GM12878 (cell line): ENCODE measurements at regions of chr11 and their contacts with region 1.

Region 1: DNA sequence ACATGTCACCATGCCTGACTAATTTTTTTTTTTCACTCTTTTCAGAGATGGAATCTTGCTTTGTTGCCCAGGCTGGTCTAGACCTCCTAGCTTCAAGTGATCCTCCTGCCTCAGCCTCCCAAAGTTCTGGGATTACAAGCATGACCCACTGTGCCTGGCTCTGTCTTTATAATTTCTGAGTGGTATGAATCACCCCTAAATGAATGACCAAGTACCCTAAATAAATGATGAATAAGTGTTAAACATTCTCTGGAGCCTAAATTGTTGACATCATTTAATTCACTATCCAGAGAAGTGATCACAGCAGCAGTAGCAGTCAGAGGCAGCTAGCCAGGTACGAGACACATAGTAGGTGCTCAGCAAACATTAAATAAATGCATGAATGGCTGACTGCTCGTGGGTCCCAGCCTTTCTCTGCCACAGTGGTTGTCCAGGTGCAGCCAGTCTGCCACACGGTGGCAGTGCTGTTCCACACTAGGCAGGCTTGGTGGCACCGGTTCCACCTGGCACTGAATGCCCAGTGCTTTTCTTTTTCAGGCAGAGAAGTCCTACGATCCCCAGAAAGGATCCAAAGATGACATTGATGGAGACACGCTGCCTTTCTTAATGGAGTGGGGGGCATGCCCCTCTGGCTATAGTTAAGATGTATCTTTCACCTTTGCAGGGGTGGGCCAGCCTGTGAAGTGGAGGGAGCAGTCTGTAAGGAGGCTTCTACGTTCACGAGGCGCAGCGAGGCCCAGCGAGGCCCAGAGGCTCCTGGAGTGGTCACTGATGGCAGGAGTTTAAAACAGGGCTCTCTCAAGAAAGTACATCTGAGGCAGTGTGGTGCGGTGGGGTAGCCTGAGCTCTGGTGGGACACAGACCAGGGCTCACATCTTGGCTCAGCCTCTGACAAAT is 8.7 kb upstream of the TTC12 start:
- DNase-seq: no peak
- ATAC-seq: peak; percentile 99
- H3K4me3 ChIP-seq: no peak overlapping the region
- H3K27ac ChIP-seq: no peak overlapping the region
- H3K4me1 ChIP-seq: no peaks in the 10 kb centered on the region
- H3K27me3 ChIP-seq: no peaks in the 10 kb centered on the region; a peak in 1 of 4 replicates
- CTCF ChIP-seq: peak; percentile 92 to 97 (median 95); a peak in 5 of 6 replicates
- EP300 ChIP-seq: no peak
- POLR2A ChIP-seq: no peak
- RAD21 ChIP-seq: peak; percentile 97

Region 2: GRCh38 chr11:113494021-113494420 is 188.3 kb after region 1 on chr11:
- CTCF ChIA-PET with region 1: interaction called, 10 read pairs
- POLR2A ChIA-PET with region 1: no interaction called
- RAD21 ChIA-PET with region 1: interaction called, 5 read pairs
- SMC1A ChIA-PET with region 1: no interaction called
- in situ Hi-C with region 1: no loop called
- intact Hi-C with region 1: no loop called
- DNase-seq: no peak
- ATAC-seq: no peak
- H3K4me3 ChIP-seq: no peak overlapping the region
- H3K27ac ChIP-seq: no peak overlapping the region
- H3K4me1 ChIP-seq: no peaks in the 10 kb centered on the region
- H3K27me3 ChIP-seq: no peaks in the 10 kb centered on the region
- CTCF ChIP-seq: 0 out of 6 replicates have a peak, but pooled peaks of 1 of the 3 experiments have one; percentile 8
- EP300 ChIP-seq: no peak
- POLR2A ChIP-seq: no peak
- RAD21 ChIP-seq: no peak

Region 3: GRCh38 chr11:113532697-113533424 is 227.2 kb after region 1 on chr11:
- CTCF ChIA-PET with region 1: interaction called, 65 read pairs
- POLR2A ChIA-PET with region 1: no interaction called
- RAD21 ChIA-PET with region 1: interaction called, 11 read pairs
- SMC1A ChIA-PET with region 1: interaction called, 7 read pairs
- in situ Hi-C with region 1: loop called (anchors 5 kb)
- intact Hi-C with region 1: loop called (anchors 1 kb)
- DNase-seq: no peak
- ATAC-seq: peak; percentile 81
- H3K4me3 ChIP-seq: no peak overlapping the region
- H3K27ac ChIP-seq: no peak overlapping the region
- H3K4me1 ChIP-seq: no peaks in the 10 kb centered on the region
- H3K27me3 ChIP-seq: no peaks in the 10 kb centered on the region
- CTCF ChIP-seq: peak; percentile 81 to 83 (median 83)
- EP300 ChIP-seq: no peak
- POLR2A ChIP-seq: no peak
- RAD21 ChIP-seq: peak; percentile 79

Region 4: GRCh38 chr11:113730887-113731726 is 425.4 kb after region 1 on chr11:
- CTCF ChIA-PET with region 1: no interaction called
- POLR2A ChIA-PET with region 1: no interaction called
- RAD21 ChIA-PET with region 1: no interaction called
- SMC1A ChIA-PET with region 1: no interaction called
- in situ Hi-C with region 1: no loop called
- intact Hi-C with region 1: loop called (anchors 5 kb)
- DNase-seq: no peak
- ATAC-seq: peak; percentile 39
- H3K4me3 ChIP-seq: no peak overlapping the region
- H3K27ac ChIP-seq: no peak overlapping the region
- H3K4me1 ChIP-seq: no peaks in the 10 kb centered on the region
- H3K27me3 ChIP-seq: no peaks in the 10 kb centered on the region
- CTCF ChIP-seq: peak in 2 of 3 experiments; percentile 18 to 54; a peak in 3 of 6 replicates
- EP300 ChIP-seq: no peak
- POLR2A ChIP-seq: no peak
- RAD21 ChIP-seq: peak; percentile 58

Region 5: GRCh38 chr11:113796663-113797259 is 491.1 kb after region 1 on chr11:
- CTCF ChIA-PET with region 1: interaction called, 10 read pairs
- POLR2A ChIA-PET with region 1: no interaction called
- RAD21 ChIA-PET with region 1: interaction called, 3 read pairs
- SMC1A ChIA-PET with region 1: interaction called, 6 read pairs
- in situ Hi-C with region 1: no loop called
- intact Hi-C with region 1: loop called (anchors 1 kb)
- DNase-seq: no peak
- ATAC-seq: peak; percentile 95
- H3K4me3 ChIP-seq: no peak overlapping the region
- H3K27ac ChIP-seq: no peak overlapping the region
- H3K4me1 ChIP-seq: no peaks in the 10 kb centered on the region
- H3K27me3 ChIP-seq: no peaks in the 10 kb centered on the region
- CTCF ChIP-seq: peak; percentile 53 to 69 (median 57)
- EP300 ChIP-seq: no peak
- POLR2A ChIP-seq: no peak
- RAD21 ChIP-seq: peak; percentile 41